IMR-90 (cell line): ENCODE measurements at regions of chrX and their contacts with region 1.

Region 1: DNA sequence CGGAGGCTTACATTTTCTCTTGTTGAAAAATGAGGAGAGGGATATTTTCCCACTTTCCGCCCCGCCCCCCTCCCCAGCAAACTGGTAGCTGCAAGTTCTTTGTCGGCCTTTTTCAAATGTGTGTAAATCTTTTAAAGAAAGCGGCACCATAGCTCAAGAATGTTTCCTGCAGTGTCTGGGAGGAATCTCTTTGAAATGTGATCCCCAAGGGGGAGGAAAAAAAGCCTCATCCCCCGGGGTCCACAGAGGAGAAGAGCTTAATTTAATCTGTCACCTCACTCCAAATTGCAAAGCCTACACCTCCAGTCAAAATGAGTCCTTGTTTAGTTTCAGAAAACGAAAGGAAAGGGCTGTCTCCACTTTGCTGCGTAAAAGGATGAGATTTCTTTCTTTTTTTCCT is 34.8 kb downstream of the ASMT start:
- DNase-seq: no peak
- ATAC-seq: no peak
- H3K4me3 ChIP-seq: peak overlapping the region; percentile 45; the same call in 1 of the 2 replicates
- H3K27ac ChIP-seq: no peak overlapping the region
- H3K4me1 ChIP-seq: no peaks in the 10 kb centered on the region
- H3K27me3 ChIP-seq: no peaks in the 10 kb centered on the region
- CTCF ChIP-seq: no peak
- POLR2A ChIP-seq: no peak
- RAD21 ChIP-seq: no peak

Region 2: GRCh38 chrX:2589186-2590030 is 939.8 kb after region 1 on chrX:
- CTCF ChIA-PET with region 1: no interaction called
- POLR2A ChIA-PET with region 1: no interaction called
- dilution Hi-C with region 1: no loop called
- in situ Hi-C with region 1: loop called (anchors 5 kb)
- intact Hi-C with region 1: loop called (anchors 1 kb)
- DNase-seq: peak; percentile 35
- ATAC-seq: no peak
- H3K4me3 ChIP-seq: no peak overlapping the region
- H3K27ac ChIP-seq: no peak overlapping the region
- H3K4me1 ChIP-seq: peaks cover 1% of the 10 kb centered on the region; the same call in 1 of the 2 replicates
- H3K27me3 ChIP-seq: peaks cover 17% of the 10 kb centered on the region
- CTCF ChIP-seq: no peak
- POLR2A ChIP-seq: no peak
- RAD21 ChIP-seq: no peak

Region 3: GRCh38 chrX:2595258-2595657 is 945.6 kb after region 1 on chrX:
- CTCF ChIA-PET with region 1: no interaction called
- POLR2A ChIA-PET with region 1: no interaction called
- dilution Hi-C with region 1: no loop called
- in situ Hi-C with region 1: loop called (anchors 5 kb)
- intact Hi-C with region 1: loop called (anchors 1 kb)
- DNase-seq: peak; percentile 11
- ATAC-seq: no peak
- H3K4me3 ChIP-seq: no peak overlapping the region
- H3K27ac ChIP-seq: no peak overlapping the region
- H3K4me1 ChIP-seq: peaks cover 1% of the 10 kb centered on the region; the same call in 1 of the 2 replicates
- H3K27me3 ChIP-seq: no peaks in the 10 kb centered on the region
- CTCF ChIP-seq: no peak
- POLR2A ChIP-seq: no peak
- RAD21 ChIP-seq: no peak

Region 4: GRCh38 chrX:2608638-2609430 is 959.2 kb after region 1 on chrX:
- CTCF ChIA-PET with region 1: no interaction called
- POLR2A ChIA-PET with region 1: no interaction called
- dilution Hi-C with region 1: no loop called
- in situ Hi-C with region 1: no loop called
- intact Hi-C with region 1: loop called (anchors 5 kb)
- DNase-seq: peak; percentile 72
- ATAC-seq: peak; percentile 97
- H3K4me3 ChIP-seq: peak overlapping the region; percentile 88
- H3K27ac ChIP-seq: peak overlapping the region; percentile 72
- H3K4me1 ChIP-seq: peaks cover 3% of the 10 kb centered on the region; the same call in 1 of the 2 replicates
- H3K27me3 ChIP-seq: no peaks in the 10 kb centered on the region
- CTCF ChIP-seq: no peak
- POLR2A ChIP-seq: no peak
- RAD21 ChIP-seq: no peak; the same call in 1 of the 2 replicates

Region 5: GRCh38 chrX:2811271-2811670 is 1161.7 kb after region 1 on chrX:
- CTCF ChIA-PET with region 1: no interaction called
- POLR2A ChIA-PET with region 1: no interaction called
- dilution Hi-C with region 1: no loop called
- in situ Hi-C with region 1: no loop called
- intact Hi-C with region 1: loop called (anchors 5 kb)
- DNase-seq: no peak
- ATAC-seq: no peak
- H3K4me3 ChIP-seq: no peak overlapping the region
- H3K27ac ChIP-seq: no peak overlapping the region
- H3K4me1 ChIP-seq: no peaks in the 10 kb centered on the region
- H3K27me3 ChIP-seq: no peaks in the 10 kb centered on the region; the same call in 1 of the 2 replicates
- CTCF ChIP-seq: no peak
- POLR2A ChIP-seq: no peak
- RAD21 ChIP-seq: no peak

Region 6: GRCh38 chrX:2819345-2820135 is 1169.9 kb after region 1 on chrX:
- CTCF ChIA-PET with region 1: no interaction called
- POLR2A ChIA-PET with region 1: no interaction called
- dilution Hi-C with region 1: no loop called
- in situ Hi-C with region 1: loop called (anchors 10 kb)
- intact Hi-C with region 1: loop called (anchors 1 kb)
- DNase-seq: peak; percentile 39
- ATAC-seq: peak; percentile 78
- H3K4me3 ChIP-seq: no peak overlapping the region
- H3K27ac ChIP-seq: no peak overlapping the region
- H3K4me1 ChIP-seq: no peaks in the 10 kb centered on the region
- H3K27me3 ChIP-seq: peaks cover 4% of the 10 kb centered on the region; the same call in 1 of the 2 replicates
- CTCF ChIP-seq: peak; percentile 62
- POLR2A ChIP-seq: no peak
- RAD21 ChIP-seq: peak; percentile 70